ENCODE measurements at regions of chr19 and their contacts with region 1.

Region 1: GRCh38 chr19:10000171-10000826 is 10.0 kb downstream of the COL5A3 start:
- DNase-seq: no peak
- H3K4me3 ChIP-seq: no peak overlapping the region
- CTCF ChIP-seq: peak; percentile 80

Region 2: GRCh38 chr19:9939301-9939913 is 60.9 kb before region 1 on chr19:
- CTCF ChIA-PET with region 1: interaction called, 31 read pairs
- POLR2A ChIA-PET with region 1: no interaction called
- DNase-seq: no peak
- H3K4me3 ChIP-seq: no peak overlapping the region
- CTCF ChIP-seq: no peak

Region 3: DNA sequence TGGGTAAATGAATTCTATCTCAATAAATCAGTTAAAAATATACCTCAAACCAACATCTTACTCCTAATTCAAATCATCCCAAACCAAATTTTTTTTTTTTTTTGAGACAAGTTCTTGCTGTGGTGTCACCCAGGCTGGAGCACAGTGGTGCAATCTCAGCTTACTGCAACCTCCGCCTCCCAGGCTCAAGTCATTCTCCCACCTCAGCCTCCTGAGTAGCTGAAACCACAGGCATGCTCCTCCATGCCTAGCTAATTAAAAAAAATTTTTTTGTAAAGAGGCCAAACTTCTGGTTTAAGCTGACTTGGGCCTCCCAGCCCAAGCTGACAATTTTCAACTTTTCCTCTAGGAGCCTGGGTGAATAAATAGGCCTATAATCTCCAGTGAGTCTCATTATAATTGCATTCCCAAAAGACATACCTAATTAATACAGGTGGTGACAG is 41.9 kb before region 1 on chr19:
- CTCF ChIA-PET with region 1: interaction called, 49 read pairs
- POLR2A ChIA-PET with region 1: no interaction called
- DNase-seq: peak; percentile 84
- H3K4me3 ChIP-seq: no peak overlapping the region
- CTCF ChIP-seq: no peak

Region 4: GRCh38 chr19:9981406-9982260 is 18.7 kb before region 1 on chr19:
- CTCF ChIA-PET with region 1: interaction called, 147 read pairs
- POLR2A ChIA-PET with region 1: no interaction called
- DNase-seq: no peak
- H3K4me3 ChIP-seq: no peak overlapping the region
- CTCF ChIP-seq: no peak

Region 5: GRCh38 chr19:10018263-10018662 is 18.0 kb after region 1 on chr19:
- CTCF ChIA-PET with region 1: interaction called, 63 read pairs
- POLR2A ChIA-PET with region 1: no interaction called
- DNase-seq: no peak
- H3K4me3 ChIP-seq: no peak overlapping the region
- CTCF ChIP-seq: no peak